Panc1 (cell line): ENCODE measurements at regions of chr7 and their contacts with region 1.

Region 1: DNA sequence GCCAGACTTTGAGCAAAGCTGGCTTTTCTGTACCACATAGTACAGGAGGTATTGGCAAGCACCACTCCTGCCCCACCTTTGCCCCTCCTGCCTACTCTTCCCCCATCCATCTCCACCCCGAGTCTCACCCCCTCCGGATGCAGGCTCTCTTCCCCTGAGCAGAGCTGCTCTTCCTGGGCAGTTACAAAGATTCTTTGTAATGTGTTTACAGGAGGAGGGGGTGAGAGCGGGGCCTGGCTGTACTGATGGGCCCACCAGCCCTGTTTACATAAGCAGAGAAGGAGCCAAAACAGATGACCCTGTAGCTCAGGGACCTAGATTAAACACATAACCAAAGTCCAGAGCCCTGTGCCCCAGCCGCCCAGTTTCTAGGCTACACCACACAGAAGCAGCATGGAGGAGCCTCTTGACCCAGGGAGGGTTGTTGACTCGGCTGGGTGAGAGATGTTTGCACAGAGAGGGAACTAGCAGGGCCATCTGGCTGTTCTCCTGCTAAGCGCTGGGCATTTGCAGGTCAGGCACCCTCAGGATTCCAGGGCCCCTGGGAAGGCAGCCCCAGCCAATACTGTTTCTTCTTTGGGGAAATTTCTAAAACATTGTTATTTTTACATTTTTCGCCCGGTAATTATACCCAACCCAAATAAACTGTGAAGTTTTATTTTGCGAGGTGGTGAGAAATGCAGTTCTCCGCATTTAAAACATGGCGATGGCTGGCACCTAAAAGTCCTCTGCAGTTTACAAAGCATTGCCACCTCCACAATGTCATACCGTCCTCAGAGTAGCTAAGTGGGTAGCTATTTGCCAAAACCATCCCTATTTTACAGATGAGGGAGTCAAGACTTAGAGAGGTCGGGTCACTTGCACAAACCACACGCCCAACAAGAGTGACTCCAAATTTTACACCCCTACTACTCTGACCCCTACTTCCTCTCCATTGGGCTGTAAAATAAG is 11.4 kb upstream of the ZKSCAN1 start:
- DNase-seq: no peak
- ATAC-seq: peak; percentile 83
- H3K4me3 ChIP-seq: peak overlapping the region in 1 of 2 experiments; percentile 5; a peak in 1 of 4 replicates
- H3K27ac ChIP-seq: peak overlapping the region; percentile 45
- H3K4me1 ChIP-seq: peaks cover 17% of the 10 kb centered on the region
- H3K27me3 ChIP-seq: no peaks in the 10 kb centered on the region
- CTCF ChIP-seq: no peak

Region 2: GRCh38 chr7:100066953-100067352 is 63.0 kb after region 1 on chr7:
- CTCF ChIA-PET with region 1: no interaction called
- POLR2A ChIA-PET with region 1: interaction called, 14 read pairs
- in situ Hi-C with region 1: no loop called
- intact Hi-C with region 1: no loop called
- DNase-seq: no peak
- ATAC-seq: peak; percentile 63; the same call in 1 of the 2 replicates
- H3K4me3 ChIP-seq: no peak overlapping the region
- H3K27ac ChIP-seq: no peak overlapping the region
- H3K4me1 ChIP-seq: no peaks in the 10 kb centered on the region; the same call in 1 of the 2 replicates
- H3K27me3 ChIP-seq: no peaks in the 10 kb centered on the region
- CTCF ChIP-seq: no peak

Region 3: DNA sequence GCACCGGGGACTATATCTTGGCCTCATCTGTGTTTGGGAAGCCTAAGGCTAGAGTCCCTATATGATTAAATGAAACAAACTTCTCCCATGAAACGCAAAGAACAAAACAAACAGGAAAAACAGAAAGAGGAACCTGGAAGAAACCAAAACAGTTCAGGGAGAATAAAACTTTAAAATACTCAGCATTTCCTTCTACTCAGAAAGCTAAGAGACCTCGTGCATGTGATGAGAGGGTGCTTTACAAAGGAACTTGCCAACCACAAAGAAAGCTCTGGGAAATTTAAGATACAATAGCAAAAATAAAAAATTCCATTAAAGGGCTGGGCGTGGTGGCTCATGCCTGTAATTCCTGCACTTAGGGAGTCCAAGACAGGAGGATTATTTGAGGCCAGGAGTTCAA is 376.2 kb after region 1 on chr7:
- CTCF ChIA-PET with region 1: no interaction called
- POLR2A ChIA-PET with region 1: no interaction called
- in situ Hi-C with region 1: no loop called
- intact Hi-C with region 1: no loop called
- DNase-seq: no peak
- ATAC-seq: no peak
- H3K4me3 ChIP-seq: no peak overlapping the region
- H3K27ac ChIP-seq: no peak overlapping the region
- H3K4me1 ChIP-seq: no peaks in the 10 kb centered on the region
- H3K27me3 ChIP-seq: no peaks in the 10 kb centered on the region
- CTCF ChIP-seq: no peak